Mammary epithelial cell (primary cell): ENCODE measurements at regions of chr12 and their contacts with region 1.

Region 1: DNA sequence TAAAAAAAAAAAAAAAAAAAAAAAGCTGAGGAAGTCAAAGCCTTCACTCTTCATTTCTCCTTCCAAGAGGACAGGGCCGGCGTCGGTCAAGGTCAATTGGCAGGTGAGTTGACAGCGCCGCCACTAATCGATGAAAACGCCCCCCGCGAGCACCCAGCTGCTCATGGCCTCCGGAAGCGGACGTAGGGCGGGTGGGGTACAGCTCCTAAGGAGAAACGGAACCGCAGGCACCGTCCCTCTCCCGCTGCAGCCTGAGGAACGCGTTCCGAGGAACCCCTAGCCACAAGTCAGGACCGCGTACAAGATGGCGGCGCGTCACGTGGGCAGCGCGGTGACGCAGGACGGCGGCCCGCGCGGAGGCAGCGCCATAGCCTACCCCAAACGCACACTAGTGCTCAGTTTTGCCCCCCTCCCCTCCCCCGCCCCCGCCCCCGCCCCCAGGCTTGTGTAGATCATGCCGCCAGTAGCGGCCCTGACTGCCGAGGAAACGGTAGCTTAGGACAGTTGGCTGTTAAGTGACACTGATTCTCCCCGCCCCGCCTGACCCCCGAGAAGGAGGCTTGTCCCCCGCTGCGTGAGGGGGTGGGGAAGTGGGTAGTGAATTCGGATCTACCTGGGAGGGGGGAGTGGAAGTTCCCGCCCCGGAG is at the start of gene ATF1:
- DNase-seq: peak; percentile 85
- H3K4me3 ChIP-seq: peak within 1 kb of the TSS; percentile 83 to 95 (median 90)
- H3K27ac ChIP-seq: peak within 1 kb of the TSS; percentile 87
- H3K4me1 ChIP-seq: peaks cover 6% of the 10 kb centered on the region
- H3K27me3 ChIP-seq: no peaks in the 10 kb centered on the region
- CTCF ChIP-seq: no peak
- total RNA-seq, gene ATF1: 20.3 to 33.8 TPM

Region 2: GRCh38 chr12:50786498-50787231 is 22.9 kb after region 1 on chr12:
- CTCF ChIA-PET with region 1: interaction called, 7 read pairs
- dilution Hi-C with region 1: no loop called
- in situ Hi-C with region 1: no loop called
- intact Hi-C with region 1: loop called (anchors 1 kb)
- DNase-seq: peak; percentile 98
- H3K4me3 ChIP-seq: peak overlapping the region in 1 of 3 experiments; percentile 7
- H3K27ac ChIP-seq: peak overlapping the region; percentile 98
- H3K4me1 ChIP-seq: peaks cover 26% of the 10 kb centered on the region
- H3K27me3 ChIP-seq: no peaks in the 10 kb centered on the region
- CTCF ChIP-seq: no peak

Region 3: DNA sequence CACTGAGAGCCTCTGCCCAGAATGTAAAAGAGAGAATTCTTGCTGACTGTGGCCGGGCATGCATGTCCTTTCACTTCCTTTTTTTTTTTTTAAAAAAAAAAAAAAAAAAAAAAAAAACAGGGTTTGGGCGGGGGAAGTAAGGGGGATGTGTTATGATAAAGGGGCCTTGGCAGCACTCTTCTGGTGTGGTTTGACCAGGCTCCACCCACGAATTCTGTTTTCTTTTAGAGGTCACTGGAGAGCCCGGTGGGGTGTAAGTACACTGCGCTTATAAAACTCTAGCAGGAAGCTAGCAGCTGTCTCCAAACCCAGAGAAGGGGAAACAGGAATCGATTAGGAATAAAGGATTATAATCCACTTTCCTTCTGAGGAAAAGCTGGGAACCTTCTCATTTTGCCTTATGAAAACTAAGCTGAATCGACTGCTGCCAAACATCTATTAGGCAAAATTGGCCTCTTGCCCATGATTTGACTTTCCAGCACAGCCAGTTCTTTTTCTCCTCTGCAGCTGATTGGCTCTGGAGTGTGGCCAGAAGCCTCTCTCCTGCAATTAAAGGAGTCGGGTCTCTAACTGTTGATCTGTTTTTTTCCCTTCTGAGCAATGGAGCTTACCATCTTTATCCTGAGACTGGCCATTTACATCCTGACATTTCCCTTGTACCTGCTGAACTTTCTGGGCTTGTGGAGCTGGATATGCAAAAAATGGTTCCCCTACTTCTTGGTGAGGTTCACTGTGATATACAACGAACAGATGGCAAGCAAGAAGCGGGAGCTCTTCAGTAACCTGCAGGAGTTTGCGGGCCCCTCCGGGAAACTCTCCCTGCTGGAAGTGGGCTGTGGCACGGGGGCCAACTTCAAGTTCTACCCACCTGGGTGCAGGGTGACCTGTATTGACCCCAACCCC is 160.9 kb after region 1 on chr12:
- CTCF ChIA-PET with region 1: interaction called, 3 read pairs
- dilution Hi-C with region 1: no loop called
- in situ Hi-C with region 1: no loop called
- intact Hi-C with region 1: loop called (anchors 2 kb)
- DNase-seq: peak; percentile 80
- H3K4me3 ChIP-seq: peak overlapping the region; percentile 39 to 63 (median 61)
- H3K27ac ChIP-seq: no peak overlapping the region
- H3K4me1 ChIP-seq: peaks cover 32% of the 10 kb centered on the region
- H3K27me3 ChIP-seq: no peaks in the 10 kb centered on the region
- CTCF ChIP-seq: no peak

Region 4: GRCh38 chr12:50986966-50987737 is 223.4 kb after region 1 on chr12:
- CTCF ChIA-PET with region 1: interaction called, 6 read pairs
- dilution Hi-C with region 1: no loop called
- in situ Hi-C with region 1: no loop called
- intact Hi-C with region 1: loop called (anchors 1 kb)
- DNase-seq: peak; percentile 32
- H3K4me3 ChIP-seq: no peak overlapping the region
- H3K27ac ChIP-seq: no peak overlapping the region
- H3K4me1 ChIP-seq: peaks cover 7% of the 10 kb centered on the region
- H3K27me3 ChIP-seq: no peaks in the 10 kb centered on the region
- CTCF ChIP-seq: peak; percentile 31 to 79

Region 5: GRCh38 chr12:51025836-51026638 is 262.3 kb after region 1 on chr12 and contains the start of gene SLC11A2:
- CTCF ChIA-PET with region 1: interaction called, 7 read pairs
- dilution Hi-C with region 1: no loop called
- in situ Hi-C with region 1: no loop called
- intact Hi-C with region 1: loop called (anchors 1 kb)
- DNase-seq: peak; percentile 95
- H3K4me3 ChIP-seq: peak within 1 kb of the TSS; percentile 73 to 87 (median 82)
- H3K27ac ChIP-seq: peak within 1 kb of the TSS; percentile 98
- H3K4me1 ChIP-seq: peaks cover 39% of the 10 kb centered on the region
- H3K27me3 ChIP-seq: no peaks in the 10 kb centered on the region
- CTCF ChIP-seq: no peak
- total RNA-seq, gene SLC11A2: 42.5 to 56.3 TPM

Region 6: DNA sequence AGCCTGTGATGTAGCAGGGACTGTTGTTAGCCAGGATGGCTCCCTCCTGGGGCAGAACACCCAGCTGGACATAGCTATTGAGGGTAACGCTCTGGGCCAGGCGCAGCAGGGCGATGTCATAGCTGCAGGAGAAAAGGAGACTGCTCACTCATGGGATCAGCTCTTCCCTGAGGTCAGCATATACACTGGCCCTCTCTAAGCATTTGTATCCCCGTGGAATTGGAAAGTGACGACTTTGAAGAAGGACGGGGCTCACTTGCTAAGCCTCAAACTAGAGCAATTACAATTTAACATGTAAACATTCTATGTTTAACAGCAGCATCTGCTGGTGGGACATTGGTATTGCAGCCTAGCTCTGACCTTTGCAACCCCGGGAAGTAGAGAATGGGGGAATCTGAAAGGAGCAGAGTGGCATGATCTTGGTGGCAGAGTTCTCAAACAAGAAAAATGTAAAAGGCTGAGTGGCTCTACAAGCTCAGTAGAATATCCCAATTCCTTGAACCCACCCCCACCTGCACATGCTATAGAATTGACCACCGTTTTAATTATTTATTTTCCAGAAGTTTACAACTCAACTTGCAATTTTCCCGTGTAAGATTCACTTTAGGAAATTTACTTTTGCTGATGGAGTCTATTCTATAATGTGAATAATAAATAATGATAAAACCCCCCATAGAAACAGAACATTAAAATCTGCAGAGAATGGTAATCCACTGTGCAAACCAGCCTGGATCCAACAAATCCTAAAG is 577.7 kb after region 1 on chr12:
- CTCF ChIA-PET with region 1: no interaction called
- dilution Hi-C with region 1: no loop called
- in situ Hi-C with region 1: no loop called
- intact Hi-C with region 1: loop called (anchors 10 kb)
- DNase-seq: peak; percentile 48
- H3K4me3 ChIP-seq: no peak overlapping the region
- H3K27ac ChIP-seq: no peak overlapping the region
- H3K4me1 ChIP-seq: peaks cover 2% of the 10 kb centered on the region
- H3K27me3 ChIP-seq: no peaks in the 10 kb centered on the region
- CTCF ChIP-seq: peak; percentile 99 to 100